ENCODE measurements at regions of chr12 and their contacts with region 1.

Region 1: GRCh38 chr12:59055204-59055839 is 135.0 kb upstream of the LRIG3 start:
- DNase-seq: peak; percentile 98
- H3K4me3 ChIP-seq: no peak overlapping the region
- H3K27ac ChIP-seq: peak overlapping the region; percentile 97
- H3K4me1 ChIP-seq: peaks cover 34% of the 10 kb centered on the region
- H3K27me3 ChIP-seq: no peaks in the 10 kb centered on the region
- CTCF ChIP-seq: no peak

Region 2: DNA sequence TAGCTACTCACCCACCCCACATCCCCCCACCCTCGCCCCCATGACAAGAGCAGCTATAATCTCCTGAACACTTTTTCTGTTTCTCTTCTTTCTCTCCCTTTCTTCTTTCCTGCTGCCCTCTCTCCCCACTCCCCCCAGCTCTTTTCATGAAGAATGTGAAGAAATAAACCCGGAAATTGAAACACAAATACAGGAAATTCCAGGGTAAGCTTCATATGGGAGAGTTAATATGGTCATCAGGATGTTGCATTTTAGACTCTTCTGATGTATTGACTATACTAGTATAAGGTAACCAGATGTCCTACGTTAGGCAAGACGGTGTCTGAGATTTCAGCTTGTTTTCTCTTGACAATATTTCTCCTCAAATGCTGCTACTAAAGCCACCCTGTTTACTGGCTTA is 93.4 kb before region 1 on chr12:
- CTCF ChIA-PET with region 1: no interaction called
- dilution Hi-C with region 1: no loop called
- in situ Hi-C with region 1: no loop called
- intact Hi-C with region 1: no loop called
- DNase-seq: no peak
- H3K4me3 ChIP-seq: no peak overlapping the region
- H3K27ac ChIP-seq: no peak overlapping the region
- H3K4me1 ChIP-seq: no peaks in the 10 kb centered on the region
- H3K27me3 ChIP-seq: no peaks in the 10 kb centered on the region
- CTCF ChIP-seq: no peak

Region 3: GRCh38 chr12:59041241-59042121 is 13.8 kb before region 1 on chr12:
- CTCF ChIA-PET with region 1: no interaction called
- dilution Hi-C with region 1: no loop called
- in situ Hi-C with region 1: no loop called
- intact Hi-C with region 1: loop called (anchors 1 kb)
- DNase-seq: peak; percentile 98
- H3K4me3 ChIP-seq: peak overlapping the region in 2 of 3 experiments; percentile 9 to 18
- H3K27ac ChIP-seq: peak overlapping the region; percentile 91
- H3K4me1 ChIP-seq: peaks cover 62% of the 10 kb centered on the region
- H3K27me3 ChIP-seq: no peaks in the 10 kb centered on the region
- CTCF ChIP-seq: no peak

Region 4: GRCh38 chr12:59067083-59067482 is 11.8 kb after region 1 on chr12:
- CTCF ChIA-PET with region 1: no interaction called
- dilution Hi-C with region 1: no loop called
- in situ Hi-C with region 1: no loop called
- intact Hi-C with region 1: loop called (anchors 1 kb)
- DNase-seq: peak; percentile 98
- H3K4me3 ChIP-seq: no peak overlapping the region
- H3K27ac ChIP-seq: peak overlapping the region; percentile 99
- H3K4me1 ChIP-seq: peaks cover 43% of the 10 kb centered on the region
- H3K27me3 ChIP-seq: no peaks in the 10 kb centered on the region
- CTCF ChIP-seq: no peak

Region 5: DNA sequence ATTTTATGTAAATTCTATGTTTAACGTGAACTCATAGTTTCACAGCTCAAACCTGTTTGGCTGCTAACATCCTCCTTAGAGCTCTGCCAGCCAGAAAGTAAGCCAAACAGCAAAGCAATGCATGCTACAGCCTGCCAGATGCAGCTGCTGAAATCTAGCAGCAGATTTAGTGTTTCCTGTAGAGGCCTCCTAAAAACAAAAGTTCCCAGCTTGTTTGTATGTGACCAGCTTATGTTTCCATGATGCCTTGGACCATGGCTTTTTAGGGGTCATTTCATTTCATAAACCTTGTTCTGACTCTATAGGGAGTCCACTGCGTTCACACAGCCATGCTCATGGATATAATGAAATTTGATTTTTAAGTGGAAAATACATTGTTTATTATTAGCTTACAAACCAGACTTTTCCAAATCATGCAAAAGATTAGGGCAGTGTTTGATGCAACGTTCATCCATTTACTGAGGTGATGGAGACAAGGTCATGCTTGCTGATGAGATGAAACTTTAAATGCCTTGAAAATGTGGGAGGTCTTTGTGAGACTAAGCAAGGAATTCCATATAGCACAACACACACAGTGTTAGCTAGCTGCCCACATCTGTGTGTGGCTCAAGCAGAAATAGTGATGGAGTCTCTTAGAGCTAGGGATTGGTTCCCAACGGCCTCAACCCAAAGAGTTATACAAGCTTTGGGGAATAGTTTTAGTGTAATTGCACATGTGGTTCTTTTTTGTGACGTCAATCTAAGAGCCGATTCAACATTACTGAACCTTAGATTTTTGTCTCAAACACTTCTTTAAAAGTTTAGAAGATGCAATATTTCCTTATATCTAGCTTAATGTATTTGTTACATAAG is 22.5 kb after region 1 on chr12:
- CTCF ChIA-PET with region 1: interaction called, 3 read pairs
- dilution Hi-C with region 1: no loop called
- in situ Hi-C with region 1: no loop called
- intact Hi-C with region 1: loop called (anchors 2 kb)
- DNase-seq: peak; percentile 89
- H3K4me3 ChIP-seq: no peak overlapping the region
- H3K27ac ChIP-seq: peak overlapping the region; percentile 95
- H3K4me1 ChIP-seq: peaks cover 41% of the 10 kb centered on the region
- H3K27me3 ChIP-seq: no peaks in the 10 kb centered on the region
- CTCF ChIP-seq: no peak

Region 6: GRCh38 chr12:59131462-59131861 is 76.1 kb after region 1 on chr12:
- CTCF ChIA-PET with region 1: no interaction called
- dilution Hi-C with region 1: no loop called
- in situ Hi-C with region 1: no loop called
- intact Hi-C with region 1: no loop called
- DNase-seq: no peak
- H3K4me3 ChIP-seq: no peak overlapping the region
- H3K27ac ChIP-seq: no peak overlapping the region
- H3K4me1 ChIP-seq: no peaks in the 10 kb centered on the region
- H3K27me3 ChIP-seq: no peaks in the 10 kb centered on the region
- CTCF ChIP-seq: no peak

Measured in mammary epithelial cell (primary cell).